Activated naive CD4-positive, alpha-beta T cell treated with anti-CD3 and anti-CD28 coated beads, Interleukin-2, amount 10 ng/mL, durations not matched to agents 7 days and 5 days (primary cell): ENCODE measurements at regions of chr2 and their contacts with region 1.

Region 1: GRCh38 chr2:239934571-239935171 is 90.5 kb downstream of the NDUFA10 start:
- DNase-seq: peak; percentile 80
- H3K4me3 Mint-ChIP-seq: no peak overlapping the region
- H3K27ac Mint-ChIP-seq: no peak overlapping the region
- H3K4me1 Mint-ChIP-seq: peaks cover 9% of the 10 kb centered on the region
- H3K27me3 Mint-ChIP-seq: peaks cover 12% of the 10 kb centered on the region

Region 2: GRCh38 chr2:239944694-239945551 is 10.3 kb after region 1 on chr2:
- CTCF ChIA-PET with region 1: interaction called, 21 read pairs
- DNase-seq: peak; percentile 74
- H3K4me3 Mint-ChIP-seq: peak overlapping the region; percentile 9
- H3K27ac Mint-ChIP-seq: peak overlapping the region; percentile 86
- H3K4me1 Mint-ChIP-seq: peaks cover 17% of the 10 kb centered on the region
- H3K27me3 Mint-ChIP-seq: no peaks in the 10 kb centered on the region

Region 3: DNA sequence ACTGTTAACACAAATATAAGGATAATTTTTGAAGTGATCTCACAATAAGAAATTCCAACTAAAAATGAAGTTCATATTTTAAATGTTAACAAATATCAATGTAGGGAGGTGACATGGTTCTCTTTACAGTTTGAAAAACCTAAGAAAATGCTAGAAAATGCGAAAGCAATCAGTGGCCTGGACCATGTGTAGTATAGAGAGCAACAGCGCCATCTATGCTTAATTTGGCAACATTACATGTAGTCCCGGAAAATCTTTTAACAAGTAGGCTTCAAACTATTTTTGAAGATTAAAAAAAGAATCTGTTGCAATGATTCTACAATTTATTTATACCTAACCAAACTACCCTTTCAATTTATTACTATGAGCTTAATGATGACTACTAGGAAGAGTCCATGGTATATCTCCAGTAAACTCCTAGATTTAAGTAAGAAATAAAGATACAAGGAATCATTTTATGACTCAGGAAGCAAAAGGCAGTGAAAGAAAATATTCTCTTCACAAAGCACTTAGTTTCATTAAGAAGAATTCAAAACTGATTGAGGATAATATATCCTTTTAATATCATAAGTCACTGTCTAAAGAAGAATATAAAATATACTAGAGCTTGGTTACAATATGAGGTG is 57.1 kb after region 1 on chr2:
- CTCF ChIA-PET with region 1: interaction called, 18 read pairs
- DNase-seq: peak; percentile 34
- H3K4me3 Mint-ChIP-seq: no peak overlapping the region
- H3K27ac Mint-ChIP-seq: no peak overlapping the region
- H3K4me1 Mint-ChIP-seq: no peaks in the 10 kb centered on the region
- H3K27me3 Mint-ChIP-seq: no peaks in the 10 kb centered on the region